PC-3 (cell line): ENCODE measurements at regions of chr1 and their contacts with region 1.

Region 1: GRCh38 chr1:27556781-27557595 is 47.0 kb downstream of the AHDC1 start:
- DNase-seq: peak; percentile 92
- ATAC-seq: peak; percentile 76
- H3K4me3 ChIP-seq: no peak overlapping the region
- H3K27ac ChIP-seq: peak overlapping the region; percentile 88
- H3K4me1 ChIP-seq: peaks cover 21% of the 10 kb centered on the region
- H3K27me3 ChIP-seq: no peaks in the 10 kb centered on the region
- CTCF ChIP-seq: peak; percentile 81

Region 2: GRCh38 chr1:26949926-26950319 is 607.1 kb before region 1 on chr1:
- CTCF ChIA-PET with region 1: no interaction called
- POLR2A ChIA-PET with region 1: no interaction called
- intact Hi-C with region 1: no loop called
- DNase-seq: peak; percentile 29
- ATAC-seq: peak; percentile 55
- H3K4me3 ChIP-seq: no peak overlapping the region
- H3K27ac ChIP-seq: no peak overlapping the region
- H3K4me1 ChIP-seq: peaks cover 10% of the 10 kb centered on the region; the same call in 1 of the 2 replicates
- H3K27me3 ChIP-seq: no peaks in the 10 kb centered on the region
- CTCF ChIP-seq: no peak

Region 3: GRCh38 chr1:27416387-27417111 is 140.4 kb before region 1 on chr1:
- CTCF ChIA-PET with region 1: interaction called, 3 read pairs
- POLR2A ChIA-PET with region 1: no interaction called
- intact Hi-C with region 1: loop called (anchors 10 kb)
- DNase-seq: peak; percentile 70
- ATAC-seq: peak; percentile 54
- H3K4me3 ChIP-seq: no peak overlapping the region
- H3K27ac ChIP-seq: no peak overlapping the region
- H3K4me1 ChIP-seq: peaks cover 17% of the 10 kb centered on the region
- H3K27me3 ChIP-seq: no peaks in the 10 kb centered on the region
- CTCF ChIP-seq: peak; percentile 87

Region 4: DNA sequence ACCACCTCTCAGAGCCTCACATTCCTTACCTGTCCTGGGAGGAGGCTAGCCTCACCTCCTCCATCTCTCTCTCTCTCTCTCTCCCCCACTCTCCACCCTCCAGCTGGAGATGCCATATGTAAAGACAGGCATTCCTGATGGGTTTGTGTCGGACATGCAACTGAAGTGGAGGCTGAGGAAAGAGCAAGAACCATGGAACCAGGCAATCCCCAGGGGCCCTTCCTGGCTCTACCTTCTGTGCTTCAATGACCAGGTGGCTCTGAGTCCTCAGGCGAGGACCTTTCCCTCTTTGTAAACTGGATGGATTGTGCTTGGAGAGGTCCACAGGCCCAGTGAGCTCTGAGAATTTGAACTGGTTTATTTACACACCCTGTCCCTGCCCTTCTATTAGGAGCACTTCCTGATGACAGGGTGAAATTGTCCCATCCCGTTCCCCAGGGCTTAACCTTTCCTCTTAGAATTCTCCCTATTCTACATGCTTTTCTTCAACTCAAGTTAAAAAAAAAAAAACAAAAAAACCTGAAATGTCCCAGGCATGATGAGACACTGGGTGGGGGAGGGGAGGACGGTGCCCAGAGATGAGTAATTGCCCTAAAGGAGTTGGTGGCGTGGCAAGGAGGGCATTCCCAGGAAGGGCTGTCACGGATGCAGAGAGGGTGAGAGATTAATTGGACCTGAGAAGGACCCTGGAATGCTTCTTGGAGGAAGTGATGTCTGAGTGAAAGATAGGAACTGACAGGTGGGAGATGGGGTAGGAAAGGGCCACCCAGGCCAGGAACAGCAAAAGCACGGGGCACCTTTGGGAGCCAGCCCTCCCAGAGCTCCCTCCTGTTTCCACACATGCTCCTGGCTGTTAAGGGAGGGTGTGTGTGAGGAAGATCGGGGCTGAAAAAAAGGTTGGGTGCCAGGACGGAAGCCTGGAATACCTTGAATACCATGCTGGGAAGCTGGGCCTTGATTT is 16.8 kb before region 1 on chr1:
- CTCF ChIA-PET with region 1: interaction called, 12 read pairs
- POLR2A ChIA-PET with region 1: interaction called, 8 read pairs
- intact Hi-C with region 1: loop called (anchors 1 kb)
- DNase-seq: peak; percentile 98
- ATAC-seq: peak; percentile 45
- H3K4me3 ChIP-seq: 0 out of 2 replicates have a peak overlapping the region, but pooled peaks have one; percentile 12
- H3K27ac ChIP-seq: peak overlapping the region; percentile 100
- H3K4me1 ChIP-seq: peaks cover 79% of the 10 kb centered on the region
- H3K27me3 ChIP-seq: no peaks in the 10 kb centered on the region
- CTCF ChIP-seq: no peak

Region 5: DNA sequence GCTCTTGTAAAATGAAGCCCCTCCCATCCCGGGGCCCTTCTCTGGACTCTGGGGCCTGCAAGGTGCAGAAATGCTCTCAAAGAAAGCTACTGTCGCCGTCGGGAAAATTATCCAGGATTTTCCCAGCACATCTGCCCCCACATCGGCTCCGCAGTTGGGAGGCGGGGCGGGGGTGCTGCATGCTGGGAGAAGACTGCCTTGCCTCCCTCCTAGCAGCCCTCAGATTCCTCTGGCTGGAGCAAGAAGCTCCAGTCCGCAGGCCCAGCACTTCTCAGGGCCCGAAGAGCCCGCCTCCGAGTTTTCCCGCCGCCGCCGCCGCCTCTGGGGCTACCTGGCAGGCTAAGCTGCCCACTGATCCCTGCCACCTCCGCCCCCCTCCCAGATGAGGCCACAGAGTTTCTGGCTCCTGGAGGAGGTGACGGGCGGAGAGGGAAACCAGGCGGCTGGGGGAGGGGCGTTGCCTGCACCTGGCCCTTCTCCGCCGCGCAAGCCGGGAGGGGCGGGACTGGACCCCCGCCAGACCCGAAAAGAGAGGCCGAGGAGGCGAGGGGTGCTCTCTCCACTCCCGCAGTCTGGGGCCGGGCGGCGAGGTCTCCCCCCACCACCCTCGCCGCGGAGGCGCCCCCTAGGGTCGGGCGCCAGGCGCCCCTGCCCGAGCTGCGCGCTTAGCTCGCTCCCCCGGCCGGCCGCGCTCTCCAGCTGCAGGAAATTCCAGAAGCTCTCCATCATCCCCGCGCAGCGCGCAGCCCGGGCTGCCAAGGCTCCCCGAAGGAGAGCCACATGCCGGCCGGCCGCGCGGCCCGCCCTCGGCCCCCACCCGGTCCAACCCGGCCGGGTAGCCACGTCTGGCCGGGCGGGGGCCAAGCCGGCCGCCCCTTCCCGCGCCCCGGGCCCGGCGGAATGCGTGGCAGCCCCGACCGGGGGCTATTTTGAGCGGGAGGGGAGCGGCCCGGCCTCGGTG is 18.2 kb after region 1 on chr1:
- CTCF ChIA-PET with region 1: interaction called, 11 read pairs
- POLR2A ChIA-PET with region 1: interaction called, 3 read pairs
- intact Hi-C with region 1: no loop called
- DNase-seq: peak; percentile 61
- ATAC-seq: peak; percentile 71
- H3K4me3 ChIP-seq: peak overlapping the region; percentile 66; the same call in 1 of the 2 replicates
- H3K27ac ChIP-seq: peak overlapping the region; percentile 23
- H3K4me1 ChIP-seq: peaks cover 21% of the 10 kb centered on the region
- H3K27me3 ChIP-seq: no peaks in the 10 kb centered on the region
- CTCF ChIP-seq: peak; percentile 50

Region 6: DNA sequence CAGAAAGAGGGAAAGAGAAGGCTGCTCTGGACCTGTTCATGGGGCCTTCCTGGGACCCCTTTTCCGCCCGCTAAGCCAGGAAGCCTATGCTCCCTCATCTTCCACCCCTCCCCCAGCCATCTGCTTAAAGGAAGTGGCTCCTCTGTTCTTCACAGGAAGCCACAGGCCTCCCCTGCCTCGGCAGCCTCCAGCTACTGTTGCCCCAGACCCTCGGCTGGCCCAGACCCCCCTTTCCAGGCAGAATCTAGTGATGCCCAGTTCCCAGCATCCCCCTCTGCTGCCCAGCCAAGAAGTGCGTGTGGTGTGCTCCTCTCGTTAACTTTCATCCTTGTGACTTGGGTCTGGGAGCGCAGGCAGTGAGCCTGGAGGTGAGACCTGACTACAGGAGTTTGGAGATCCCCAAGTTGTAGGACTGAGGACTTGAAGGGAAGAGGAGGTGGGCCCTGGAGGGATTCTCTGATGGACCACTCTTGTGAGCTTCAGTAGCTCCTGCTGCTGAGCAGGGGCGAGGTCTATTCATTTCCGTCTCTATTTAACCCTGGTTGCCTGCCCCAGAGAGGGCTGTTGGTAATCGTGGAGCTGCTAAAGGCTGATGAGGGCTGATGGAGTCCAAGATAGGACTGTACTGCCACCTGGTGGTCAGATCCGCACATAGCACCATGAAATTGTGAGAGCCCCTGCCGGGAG is 105.9 kb after region 1 on chr1:
- CTCF ChIA-PET with region 1: no interaction called
- POLR2A ChIA-PET with region 1: no interaction called
- intact Hi-C with region 1: loop called (anchors 5 kb)
- DNase-seq: peak; percentile 93
- ATAC-seq: peak; percentile 69
- H3K4me3 ChIP-seq: no peak overlapping the region
- H3K27ac ChIP-seq: no peak overlapping the region
- H3K4me1 ChIP-seq: peaks cover 17% of the 10 kb centered on the region
- H3K27me3 ChIP-seq: no peaks in the 10 kb centered on the region
- CTCF ChIP-seq: peak; percentile 89